ENCODE measurements at regions of chr17 and their contacts with region 1.

Region 1: GRCh38 chr17:42577532-42578281 is at the start of gene PSMC3IP:
- H3K4me3 Mint-ChIP-seq: peak within 1 kb of the TSS; percentile 79
- H3K27ac Mint-ChIP-seq: peak within 1 kb of the TSS; percentile 95
- H3K4me1 Mint-ChIP-seq: peaks cover 55% of the 10 kb centered on the region
- H3K27me3 Mint-ChIP-seq: no peaks in the 10 kb centered on the region

Region 2: GRCh38 chr17:42566883-42567573 is 10.7 kb before region 1 on chr17 and contains the start of gene MLX:
- intact Hi-C with region 1: loop called (anchors 1 kb)
- H3K4me3 Mint-ChIP-seq: peak within 1 kb of the TSS; percentile 91
- H3K27ac Mint-ChIP-seq: peak within 1 kb of the TSS; percentile 86
- H3K4me1 Mint-ChIP-seq: peaks cover 65% of the 10 kb centered on the region
- H3K27me3 Mint-ChIP-seq: no peaks in the 10 kb centered on the region

Region 3: DNA sequence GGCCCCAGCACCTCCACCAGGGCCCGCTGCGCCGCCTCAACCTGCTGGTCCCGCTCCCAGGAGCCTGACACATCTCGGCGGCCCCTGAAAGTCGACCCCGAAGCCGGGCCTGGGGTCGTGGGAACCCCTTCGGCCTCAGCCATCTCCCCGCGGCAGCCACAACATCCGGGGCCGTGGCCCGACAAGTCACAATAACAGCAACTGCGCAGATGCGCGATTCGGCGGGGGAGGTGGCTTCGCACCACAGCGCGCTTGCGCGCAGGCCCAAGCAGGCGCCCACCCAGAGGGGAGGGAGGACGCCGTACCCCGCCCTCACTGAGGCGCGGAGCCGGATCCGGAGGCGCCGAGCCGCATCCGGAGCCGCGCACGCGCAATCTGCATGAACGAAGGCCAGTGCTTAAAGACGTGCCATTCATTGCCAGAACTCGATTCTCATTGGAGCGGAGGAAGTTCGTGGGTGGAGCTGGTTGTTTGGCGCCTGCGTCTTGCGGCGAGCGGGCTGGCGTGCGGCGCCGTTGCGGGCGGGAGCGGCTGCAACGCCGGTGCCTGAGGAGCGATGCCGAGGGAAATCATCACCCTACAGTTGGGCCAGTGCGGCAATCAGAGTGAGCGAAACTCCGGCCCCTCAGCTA is 31.6 kb after region 1 on chr17 and contains the starts of genes RETREG3 and TUBG1:
- intact Hi-C with region 1: loop called (anchors 2 kb)
- H3K4me3 Mint-ChIP-seq: peak within 1 kb of the TSS; percentile 99
- H3K27ac Mint-ChIP-seq: peak within 1 kb of the TSS; percentile 90
- H3K4me1 Mint-ChIP-seq: peaks cover 26% of the 10 kb centered on the region
- H3K27me3 Mint-ChIP-seq: no peaks in the 10 kb centered on the region

Region 4: GRCh38 chr17:42677921-42678781 is 100.4 kb after region 1 on chr17:
- intact Hi-C with region 1: loop called (anchors 2 kb)
- H3K4me3 Mint-ChIP-seq: peak overlapping the region; percentile 84
- H3K27ac Mint-ChIP-seq: peak overlapping the region; percentile 95
- H3K4me1 Mint-ChIP-seq: peaks cover 69% of the 10 kb centered on the region
- H3K27me3 Mint-ChIP-seq: peaks cover 66% of the 10 kb centered on the region

Measured in dendritic cell treated with granulocyte-macrophage colony-stimulating factor and Interleukin-4, amounts not matched to agents 40 ng/mL and 50 ng/mL, for 4 days (primary cell).